Dendritic cell treated with granulocyte-macrophage colony-stimulating factor and Interleukin-4, amounts not matched to agents 40 ng/mL and 50 ng/mL, for 4 days (primary cell): ENCODE measurements at regions of chr5 and their contacts with region 1.

Region 1: GRCh38 chr5:65035211-65036206 is 266.8 kb downstream of the CWC27 start:
- H3K4me3 Mint-ChIP-seq: peak overlapping the region; percentile 77
- H3K27ac Mint-ChIP-seq: peak overlapping the region; percentile 95
- H3K4me1 Mint-ChIP-seq: peaks cover 23% of the 10 kb centered on the region
- H3K27me3 Mint-ChIP-seq: no peaks in the 10 kb centered on the region

Region 2: GRCh38 chr5:64273276-64273675 is 762.2 kb before region 1 on chr5:
- intact Hi-C with region 1: no loop called
- H3K4me3 Mint-ChIP-seq: no peak overlapping the region
- H3K27ac Mint-ChIP-seq: no peak overlapping the region
- H3K4me1 Mint-ChIP-seq: no peaks in the 10 kb centered on the region
- H3K27me3 Mint-ChIP-seq: no peaks in the 10 kb centered on the region

Region 3: DNA sequence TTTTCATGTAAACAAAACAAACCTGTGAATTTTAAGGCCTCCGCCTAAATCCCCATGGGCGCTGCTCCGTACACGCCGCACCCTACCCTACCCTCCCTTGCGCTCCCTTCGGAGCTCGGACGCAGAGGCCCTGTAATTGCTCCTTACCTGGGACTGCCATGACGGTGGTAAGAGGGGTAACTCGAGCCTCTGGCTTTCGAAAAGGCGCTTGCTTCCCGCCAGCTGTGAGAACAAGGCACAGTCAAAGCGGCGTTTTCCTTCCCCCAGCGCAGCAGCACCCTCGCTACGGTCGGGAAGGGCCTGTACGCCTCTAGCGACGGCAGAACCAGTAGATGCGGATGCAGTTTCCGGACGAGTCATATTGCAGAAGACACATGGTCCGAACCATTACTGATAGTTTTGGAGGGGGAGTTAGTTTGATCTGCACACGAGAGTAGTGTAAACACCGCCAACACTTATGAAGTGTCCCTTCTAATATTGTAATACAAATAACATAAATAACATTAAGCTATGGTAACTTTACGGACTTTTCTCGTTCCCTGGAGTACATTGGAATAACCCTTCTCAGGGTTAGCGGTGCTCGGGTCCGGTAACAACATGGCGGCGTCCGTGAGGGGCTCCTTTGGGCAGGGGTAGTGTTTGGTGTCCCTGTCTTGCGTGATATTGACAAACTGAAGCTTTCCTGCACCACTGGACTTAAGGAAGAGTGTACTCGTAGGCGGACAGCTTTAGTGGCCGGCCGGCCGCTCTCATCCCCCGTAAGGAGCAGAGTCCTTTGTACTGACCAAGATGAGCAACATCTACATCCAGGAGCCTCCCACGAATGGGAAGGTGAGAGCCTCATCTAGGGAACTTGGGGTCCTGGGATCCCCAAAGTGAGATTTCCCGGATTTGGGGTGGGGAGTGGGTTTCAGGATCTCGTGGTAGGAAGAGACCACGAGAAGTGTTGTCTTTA is 266.9 kb before region 1 on chr5 and contains the starts of genes CWC27 and SREK1IP1:
- intact Hi-C with region 1: loop called (anchors 5 kb)
- H3K4me3 Mint-ChIP-seq: peak within 1 kb of the TSS; percentile 95
- H3K27ac Mint-ChIP-seq: peak within 1 kb of the TSS; percentile 96
- H3K4me1 Mint-ChIP-seq: peaks cover 49% of the 10 kb centered on the region
- H3K27me3 Mint-ChIP-seq: no peaks in the 10 kb centered on the region

Region 4: DNA sequence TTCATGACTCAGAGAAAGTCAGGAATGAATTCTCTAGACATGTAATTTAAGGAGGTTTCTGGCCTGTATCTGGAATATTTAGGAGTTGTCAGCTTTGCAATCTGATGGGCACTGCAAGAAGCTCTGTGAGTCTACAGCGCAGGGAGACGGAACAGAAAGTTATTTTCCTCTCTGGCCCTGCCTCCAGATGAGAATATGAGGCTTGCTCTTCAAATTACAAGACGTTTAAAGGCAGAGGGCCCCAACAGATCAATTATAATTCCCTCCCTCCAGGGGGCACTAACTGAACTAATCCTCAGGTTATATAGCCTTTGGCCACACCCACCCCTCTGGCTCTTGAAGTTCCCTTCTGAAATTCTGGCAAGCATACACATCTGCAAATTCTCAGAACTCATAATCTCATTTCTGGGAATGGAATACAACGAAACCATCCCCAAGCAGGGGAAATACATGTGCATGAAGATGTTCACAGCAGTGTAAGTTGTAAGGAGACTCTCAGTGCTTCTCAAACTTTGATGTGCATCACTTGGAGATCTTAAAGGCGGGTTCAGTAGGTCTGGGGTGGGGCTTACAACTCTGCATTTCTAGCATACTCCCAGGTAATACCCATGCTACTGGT is 40.9 kb after region 1 on chr5:
- intact Hi-C with region 1: loop called (anchors 5 kb)
- H3K4me3 Mint-ChIP-seq: no peak overlapping the region
- H3K27ac Mint-ChIP-seq: peak overlapping the region; percentile 21
- H3K4me1 Mint-ChIP-seq: peaks cover 54% of the 10 kb centered on the region
- H3K27me3 Mint-ChIP-seq: peaks cover 19% of the 10 kb centered on the region

Region 5: DNA sequence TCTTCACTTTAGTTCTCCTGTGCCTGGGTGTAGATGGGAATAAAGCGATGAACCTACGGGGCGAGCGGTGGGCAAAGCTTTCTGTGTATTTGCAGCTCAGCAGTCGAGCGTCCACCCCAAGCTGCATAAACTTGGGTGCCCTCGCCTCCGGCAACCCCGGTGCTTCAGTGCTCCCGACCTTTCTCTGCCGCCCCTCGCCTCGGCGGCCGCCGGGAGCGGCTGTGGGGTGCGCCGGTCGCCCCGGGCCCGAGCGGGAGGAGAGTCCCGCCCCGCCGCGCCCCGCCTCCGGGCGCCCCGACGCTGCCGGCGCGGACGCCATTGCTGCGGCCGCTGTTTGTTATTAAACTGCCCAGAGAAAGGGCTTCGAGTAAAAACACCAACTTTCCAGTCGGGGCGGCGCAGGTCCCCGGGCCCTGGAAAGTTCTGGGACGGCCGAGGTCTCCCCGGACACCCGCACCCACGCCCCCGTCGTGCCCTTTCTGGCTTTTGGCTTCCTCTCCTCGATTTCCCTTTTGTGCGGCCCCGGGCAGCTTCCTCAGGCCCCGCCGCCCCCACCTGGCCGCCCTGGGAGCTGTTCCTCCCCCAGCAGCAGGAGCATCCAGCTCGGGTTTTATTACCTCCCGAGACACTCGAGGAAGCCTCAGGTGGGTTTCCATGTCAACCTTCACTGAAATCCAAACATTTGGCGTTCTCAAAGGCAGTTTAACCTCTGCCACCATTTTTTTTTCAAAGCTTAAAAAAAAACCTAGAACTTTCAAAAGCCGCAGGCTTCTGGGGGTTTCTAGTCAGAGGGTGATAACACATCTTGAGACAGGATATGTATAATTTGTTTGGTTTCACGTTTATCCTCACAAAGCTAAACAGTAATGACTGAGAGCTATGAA is 67.6 kb after region 1 on chr5:
- intact Hi-C with region 1: loop called (anchors 5 kb)
- H3K4me3 Mint-ChIP-seq: peak overlapping the region; percentile 75
- H3K27ac Mint-ChIP-seq: peak overlapping the region; percentile 79
- H3K4me1 Mint-ChIP-seq: peaks cover 27% of the 10 kb centered on the region
- H3K27me3 Mint-ChIP-seq: peaks cover 25% of the 10 kb centered on the region